GM12878 (cell line): ENCODE measurements at regions of chr5 and their contacts with region 1.

Region 1: GRCh38 chr5:100903039-100903887 is at the start of gene ST8SIA4:
- DNase-seq: peak; percentile 95
- ATAC-seq: peak; percentile 67
- H3K4me3 ChIP-seq: peak within 1 kb of the TSS; percentile 98
- H3K27ac ChIP-seq: peak within 1 kb of the TSS; percentile 98
- H3K4me1 ChIP-seq: no peaks in the 10 kb centered on the region
- H3K27me3 ChIP-seq: no peaks in the 10 kb centered on the region
- CTCF ChIP-seq: no peak
- EP300 ChIP-seq: peak in 1 of 2 experiments; percentile 24; a peak in 1 of 4 replicates
- POLR2A ChIP-seq: peak; percentile 93
- RAD21 ChIP-seq: peak; percentile 18; the same call in 1 of the 2 replicates
- polyA plus RNA-seq, gene ST8SIA4: 4.4 to 7.3 TPM

Region 2: DNA sequence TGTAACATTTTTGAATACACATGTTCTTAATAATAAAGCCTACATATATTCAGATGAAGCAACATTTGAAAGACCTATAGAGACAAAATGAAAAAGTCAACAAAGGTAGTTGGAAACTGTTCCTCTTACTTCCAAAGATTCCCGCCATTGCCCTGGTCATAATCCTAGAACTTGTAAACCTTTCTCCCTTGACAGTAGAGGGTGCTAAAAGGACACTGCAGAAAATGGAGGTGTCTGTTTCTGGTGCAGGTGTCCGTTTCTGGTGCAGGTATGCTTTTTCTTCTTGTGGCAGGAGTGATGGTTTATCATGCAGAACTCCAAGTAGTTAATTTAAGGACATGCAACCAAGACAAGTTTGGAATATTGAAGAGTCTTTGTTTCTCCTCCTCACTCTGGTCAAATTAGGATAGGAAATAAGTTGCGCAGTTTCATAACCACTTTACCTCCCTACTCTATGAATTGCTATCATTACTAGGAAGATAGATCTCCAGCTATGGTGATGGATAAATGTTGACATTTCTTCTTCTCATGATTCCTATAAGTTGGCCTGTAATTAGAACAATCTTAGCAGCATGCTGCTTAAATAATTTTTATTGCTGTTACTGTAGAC is 424.1 kb before region 1 on chr5:
- CTCF ChIA-PET with region 1: interaction called, 3 read pairs
- POLR2A ChIA-PET with region 1: no interaction called
- RAD21 ChIA-PET with region 1: no interaction called
- SMC1A ChIA-PET with region 1: no interaction called
- in situ Hi-C with region 1: no loop called
- intact Hi-C with region 1: loop called (anchors 2 kb)
- DNase-seq: peak; percentile 15
- ATAC-seq: peak; percentile 88
- H3K4me3 ChIP-seq: no peak overlapping the region
- H3K27ac ChIP-seq: no peak overlapping the region
- H3K4me1 ChIP-seq: no peaks in the 10 kb centered on the region
- H3K27me3 ChIP-seq: no peaks in the 10 kb centered on the region
- CTCF ChIP-seq: peak; percentile 68 to 71 (median 71)
- EP300 ChIP-seq: no peak
- POLR2A ChIP-seq: no peak
- RAD21 ChIP-seq: peak; percentile 97

Region 3: DNA sequence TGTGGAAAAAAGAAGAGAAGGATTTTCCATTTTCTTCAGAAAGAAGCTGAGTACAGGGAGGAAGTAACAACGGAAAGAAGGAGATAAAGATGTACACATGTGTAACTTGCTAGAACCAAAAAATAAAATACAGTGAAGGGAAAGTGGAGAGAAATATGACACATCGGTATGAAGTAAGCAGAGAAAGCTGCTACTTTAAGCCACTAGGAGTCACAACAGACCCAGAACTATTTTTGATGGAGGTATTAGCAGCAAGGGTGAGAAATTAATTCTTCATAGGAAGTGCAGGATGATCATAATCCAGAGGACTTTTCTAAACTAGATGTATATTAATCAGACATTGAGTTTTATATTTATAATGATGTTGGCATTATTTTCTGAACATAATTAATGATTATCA is 279.5 kb before region 1 on chr5:
- CTCF ChIA-PET with region 1: interaction called, 19 read pairs
- POLR2A ChIA-PET with region 1: interaction called, 3 read pairs
- RAD21 ChIA-PET with region 1: interaction called, 14 read pairs
- SMC1A ChIA-PET with region 1: interaction called, 7 read pairs
- in situ Hi-C with region 1: no loop called
- intact Hi-C with region 1: loop called (anchors 2 kb)
- DNase-seq: no peak
- ATAC-seq: peak; percentile 96
- H3K4me3 ChIP-seq: no peak overlapping the region
- H3K27ac ChIP-seq: no peak overlapping the region
- H3K4me1 ChIP-seq: no peaks in the 10 kb centered on the region
- H3K27me3 ChIP-seq: no peaks in the 10 kb centered on the region
- CTCF ChIP-seq: peak; percentile 62 to 67 (median 62)
- EP300 ChIP-seq: no peak
- POLR2A ChIP-seq: no peak
- RAD21 ChIP-seq: peak; percentile 92

Region 4: GRCh38 chr5:100790170-100790665 is 113.0 kb before region 1 on chr5:
- CTCF ChIA-PET with region 1: interaction called, 7 read pairs
- POLR2A ChIA-PET with region 1: interaction called, 9 read pairs
- RAD21 ChIA-PET with region 1: interaction called, 32 read pairs
- SMC1A ChIA-PET with region 1: interaction called, 14 read pairs
- in situ Hi-C with region 1: no loop called
- intact Hi-C with region 1: no loop called
- DNase-seq: no peak
- ATAC-seq: peak; percentile 80
- H3K4me3 ChIP-seq: no peak overlapping the region
- H3K27ac ChIP-seq: no peak overlapping the region
- H3K4me1 ChIP-seq: peaks cover 12% of the 10 kb centered on the region
- H3K27me3 ChIP-seq: no peaks in the 10 kb centered on the region
- CTCF ChIP-seq: peak in 1 of 3 experiments; percentile 31; a peak in 2 of 6 replicates
- EP300 ChIP-seq: no peak
- POLR2A ChIP-seq: no peak
- RAD21 ChIP-seq: no peak

Region 5: DNA sequence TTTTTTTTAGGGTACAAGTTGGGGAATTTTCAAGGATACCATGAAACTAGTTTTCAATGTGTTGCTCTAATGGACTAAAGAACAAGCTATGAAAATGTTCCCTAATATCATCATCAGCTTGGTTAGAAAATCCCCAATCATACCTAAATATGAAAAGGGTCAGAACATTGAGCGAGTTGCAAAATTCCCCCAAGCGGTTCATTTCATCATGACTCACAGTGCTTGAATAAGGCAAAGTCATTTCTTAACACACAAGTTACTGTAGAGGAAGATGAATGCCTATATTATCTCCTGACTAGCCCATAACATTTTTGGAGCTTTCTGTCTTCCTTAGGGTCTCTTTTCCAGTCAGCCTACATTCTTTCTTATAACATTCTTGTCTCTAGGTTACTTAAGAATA is 62.9 kb before region 1 on chr5:
- CTCF ChIA-PET with region 1: interaction called, 43 read pairs
- POLR2A ChIA-PET with region 1: interaction called, 96 read pairs
- RAD21 ChIA-PET with region 1: interaction called, 289 read pairs
- SMC1A ChIA-PET with region 1: interaction called, 303 read pairs
- in situ Hi-C with region 1: no loop called
- intact Hi-C with region 1: loop called (anchors 1 kb)
- DNase-seq: peak; percentile 81
- ATAC-seq: peak; percentile 84
- H3K4me3 ChIP-seq: no peak overlapping the region
- H3K27ac ChIP-seq: peak overlapping the region; percentile 85
- H3K4me1 ChIP-seq: peaks cover 28% of the 10 kb centered on the region
- H3K27me3 ChIP-seq: no peaks in the 10 kb centered on the region
- CTCF ChIP-seq: 0 out of 6 replicates have a peak, but pooled peaks of 1 of the 3 experiments have one; percentile 9
- EP300 ChIP-seq: peak; percentile 84 to 86; a peak in 3 of 4 replicates
- POLR2A ChIP-seq: no peak
- RAD21 ChIP-seq: peak; percentile 32; the same call in 1 of the 2 replicates

Region 6: DNA sequence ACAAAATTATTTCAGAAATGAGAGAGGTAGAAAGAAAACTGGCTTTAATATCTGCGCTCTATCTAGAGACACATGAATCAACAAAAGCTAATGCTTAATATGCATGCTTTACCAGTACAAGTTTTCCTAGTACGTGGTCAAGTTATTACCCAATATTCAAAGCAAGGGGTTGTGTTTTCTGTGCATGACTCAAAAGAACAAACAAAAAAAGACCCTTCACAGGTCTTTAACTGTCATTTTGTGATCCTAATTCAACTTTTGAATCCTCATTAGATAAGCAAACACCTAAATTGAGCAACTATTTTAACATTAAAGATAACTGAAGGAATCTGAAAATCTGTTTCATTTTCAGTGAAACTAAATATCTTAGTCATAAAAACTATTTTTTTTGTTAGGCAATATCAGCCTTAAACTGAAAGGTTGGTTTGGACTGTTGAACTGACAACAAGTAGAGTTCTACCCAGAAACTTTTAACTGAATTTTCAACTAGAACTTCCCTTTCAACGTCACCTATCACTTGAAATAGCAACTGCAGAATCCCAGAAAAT is 12.7 kb before region 1 on chr5:
- CTCF ChIA-PET with region 1: interaction called, 64 read pairs
- POLR2A ChIA-PET with region 1: interaction called, 49 read pairs
- RAD21 ChIA-PET with region 1: interaction called, 275 read pairs
- SMC1A ChIA-PET with region 1: interaction called, 281 read pairs
- in situ Hi-C with region 1: no loop called
- intact Hi-C with region 1: loop called (anchors 1 kb)
- DNase-seq: peak; percentile 64
- ATAC-seq: peak; percentile 73
- H3K4me3 ChIP-seq: peak overlapping the region; percentile 58
- H3K27ac ChIP-seq: peak overlapping the region; percentile 87
- H3K4me1 ChIP-seq: peaks cover 15% of the 10 kb centered on the region; the same call in 1 of the 2 replicates
- H3K27me3 ChIP-seq: no peaks in the 10 kb centered on the region
- CTCF ChIP-seq: no peak
- EP300 ChIP-seq: peak; percentile 46 to 57; a peak in 2 of 4 replicates
- POLR2A ChIP-seq: no peak
- RAD21 ChIP-seq: 0 out of 2 replicates have a peak, but pooled peaks have one; percentile 2

Region 7: DNA sequence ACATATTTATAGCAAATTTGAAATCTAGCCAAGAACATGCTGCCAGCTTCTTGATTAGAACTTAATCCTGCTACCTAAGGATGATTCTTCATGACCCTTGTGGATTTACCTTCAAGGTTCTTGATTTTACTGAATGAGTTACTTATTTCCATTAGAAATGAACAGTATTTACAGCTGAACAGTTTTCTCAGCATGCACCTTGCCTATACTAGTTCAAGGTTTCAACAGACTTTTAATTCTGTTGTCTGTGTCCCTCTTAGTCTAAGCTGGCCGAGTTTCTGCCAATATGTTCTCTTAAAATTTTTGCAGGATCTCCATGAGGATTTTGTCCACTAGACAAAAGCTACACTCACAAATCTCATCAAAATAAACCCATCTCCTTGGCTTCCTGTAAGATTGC is 188.6 kb after region 1 on chr5:
- CTCF ChIA-PET with region 1: no interaction called
- POLR2A ChIA-PET with region 1: no interaction called
- RAD21 ChIA-PET with region 1: no interaction called
- SMC1A ChIA-PET with region 1: no interaction called
- in situ Hi-C with region 1: no loop called
- intact Hi-C with region 1: no loop called
- DNase-seq: no peak
- ATAC-seq: no peak
- H3K4me3 ChIP-seq: no peak overlapping the region
- H3K27ac ChIP-seq: no peak overlapping the region
- H3K4me1 ChIP-seq: no peaks in the 10 kb centered on the region
- H3K27me3 ChIP-seq: no peaks in the 10 kb centered on the region
- CTCF ChIP-seq: no peak
- EP300 ChIP-seq: no peak
- POLR2A ChIP-seq: no peak
- RAD21 ChIP-seq: no peak